Activated naive CD4-positive, alpha-beta T cell treated with anti-CD3 and anti-CD28 coated beads for 36 hours (primary cell): ENCODE measurements at regions of chr12 and their contacts with region 1.

Region 1: DNA sequence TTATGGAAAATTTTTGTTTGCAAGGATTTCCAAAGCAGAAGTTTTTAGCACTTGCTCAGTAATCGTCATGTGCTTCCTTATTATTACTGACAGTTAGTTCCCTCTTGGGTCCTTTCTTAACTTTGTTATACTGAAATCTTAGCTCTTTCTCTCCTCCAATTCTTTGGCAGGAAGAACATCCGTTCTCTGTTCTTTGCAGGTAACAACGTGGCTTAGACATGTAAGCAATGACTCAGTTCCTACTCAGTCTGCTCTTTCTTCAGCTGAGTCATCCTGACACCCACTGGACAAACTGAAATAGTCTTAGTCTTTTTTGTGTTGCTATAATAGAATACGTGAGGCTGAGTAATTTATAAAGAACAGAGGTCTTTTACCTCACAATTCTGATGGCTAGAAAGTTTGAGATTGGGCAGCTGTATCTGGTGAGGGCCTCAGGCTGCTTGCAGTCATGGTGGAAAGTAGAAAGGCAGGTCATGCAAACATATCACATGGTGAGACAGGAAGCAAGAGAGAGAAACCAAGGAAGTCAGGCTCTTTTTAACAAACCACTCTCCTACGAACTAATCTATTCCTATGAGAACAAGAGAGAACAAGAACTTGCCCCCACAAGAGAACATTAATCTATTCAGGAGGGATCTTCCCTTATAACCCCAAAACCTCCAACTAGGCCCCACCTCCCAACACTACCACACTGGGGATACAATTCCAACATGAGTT is 49.2 kb downstream of the TESPA1 start:
- DNase-seq: peak; percentile 69
- H3K4me3 Mint-ChIP-seq: peak overlapping the region; percentile 51
- H3K27ac Mint-ChIP-seq: peak overlapping the region; percentile 93
- H3K4me1 Mint-ChIP-seq: peaks cover 64% of the 10 kb centered on the region
- H3K27me3 Mint-ChIP-seq: no peaks in the 10 kb centered on the region

Region 2: DNA sequence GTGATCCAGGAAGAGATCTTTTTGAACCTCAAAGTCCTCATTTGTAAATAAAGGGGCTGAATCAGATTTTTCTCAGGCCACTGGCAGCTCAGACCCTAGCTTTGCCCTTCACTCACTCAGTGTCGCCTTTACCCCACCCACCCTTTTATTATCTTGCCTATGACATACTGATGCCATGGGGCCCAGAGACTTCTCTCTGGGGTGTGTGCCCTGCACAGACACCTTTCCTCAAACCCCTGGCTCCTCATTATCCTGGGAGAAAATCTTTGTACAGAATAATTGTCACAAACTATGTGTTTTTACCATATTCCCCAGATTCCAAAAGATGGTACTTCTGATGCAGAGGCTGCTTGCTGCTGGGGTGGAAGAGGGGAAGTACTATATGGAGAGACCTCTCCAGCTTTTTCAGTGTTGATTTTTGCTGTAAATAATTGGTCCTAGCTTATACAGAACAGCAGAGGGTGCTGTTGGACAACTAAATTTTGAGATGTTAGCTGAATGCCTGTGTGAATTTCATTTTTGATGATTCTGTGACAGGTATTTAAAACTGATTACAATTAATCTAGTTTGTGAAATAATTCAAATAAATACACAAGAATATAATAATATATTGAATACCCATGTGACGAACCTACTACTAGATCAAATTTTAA is 233.3 kb before region 1 on chr12:
- CTCF ChIA-PET with region 1: no interaction called
- intact Hi-C with region 1: loop called (anchors 1 kb)
- DNase-seq: no peak
- H3K4me3 Mint-ChIP-seq: no peak overlapping the region
- H3K27ac Mint-ChIP-seq: no peak overlapping the region
- H3K4me1 Mint-ChIP-seq: no peaks in the 10 kb centered on the region
- H3K27me3 Mint-ChIP-seq: no peaks in the 10 kb centered on the region

Region 3: GRCh38 chr12:54865683-54866324 is 69.6 kb before region 1 on chr12:
- CTCF ChIA-PET with region 1: no interaction called
- intact Hi-C with region 1: loop called (anchors 1 kb)
- DNase-seq: peak; percentile 42
- H3K4me3 Mint-ChIP-seq: no peak overlapping the region
- H3K27ac Mint-ChIP-seq: no peak overlapping the region
- H3K4me1 Mint-ChIP-seq: peaks cover 36% of the 10 kb centered on the region
- H3K27me3 Mint-ChIP-seq: peaks cover 25% of the 10 kb centered on the region

Region 4: DNA sequence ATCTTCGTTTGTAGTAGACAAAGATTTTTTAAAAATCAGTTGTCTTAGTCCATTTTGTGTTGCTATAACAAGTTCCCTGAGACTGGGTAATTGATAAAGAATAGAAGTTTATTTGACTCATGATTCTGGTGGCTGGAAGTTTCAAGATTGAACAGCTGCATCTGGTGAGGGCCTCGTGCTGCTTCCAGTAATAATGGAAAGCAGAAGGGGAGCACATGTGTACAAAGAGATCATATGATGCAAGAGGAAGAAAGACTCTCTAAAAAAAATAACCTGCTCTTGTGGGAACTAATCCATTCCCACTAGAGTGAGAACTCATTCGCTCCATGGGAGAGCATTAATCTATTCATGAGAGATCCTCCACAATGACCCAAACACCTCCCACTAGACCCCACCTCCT is 56.2 kb before region 1 on chr12:
- CTCF ChIA-PET with region 1: interaction called, 3 read pairs
- intact Hi-C with region 1: loop called (anchors 1 kb)
- DNase-seq: peak; percentile 50
- H3K4me3 Mint-ChIP-seq: no peak overlapping the region
- H3K27ac Mint-ChIP-seq: peak overlapping the region; percentile 22
- H3K4me1 Mint-ChIP-seq: peaks cover 16% of the 10 kb centered on the region
- H3K27me3 Mint-ChIP-seq: peaks cover 8% of the 10 kb centered on the region